Activated CD4-positive, alpha-beta memory T cell treated with anti-CD3 and anti-CD28 coated beads, Interleukin-2, amount 10 ng/mL, durations not matched to agents 7 days and 5 days (primary cell): ENCODE measurements at regions of chr16 and their contacts with region 1.

Region 1: GRCh38 chr16:15643048-15643945 is at the start of gene MARF1:
- DNase-seq: peak; percentile 99
- H3K4me3 Mint-ChIP-seq: peak within 1 kb of the TSS; percentile 86
- H3K27ac Mint-ChIP-seq: peak within 1 kb of the TSS; percentile 93
- H3K4me1 Mint-ChIP-seq: peaks cover 50% of the 10 kb centered on the region
- H3K27me3 Mint-ChIP-seq: no peaks in the 10 kb centered on the region
- total RNA-seq, gene MARF1: 85.4 to 85.5 TPM

Region 2: DNA sequence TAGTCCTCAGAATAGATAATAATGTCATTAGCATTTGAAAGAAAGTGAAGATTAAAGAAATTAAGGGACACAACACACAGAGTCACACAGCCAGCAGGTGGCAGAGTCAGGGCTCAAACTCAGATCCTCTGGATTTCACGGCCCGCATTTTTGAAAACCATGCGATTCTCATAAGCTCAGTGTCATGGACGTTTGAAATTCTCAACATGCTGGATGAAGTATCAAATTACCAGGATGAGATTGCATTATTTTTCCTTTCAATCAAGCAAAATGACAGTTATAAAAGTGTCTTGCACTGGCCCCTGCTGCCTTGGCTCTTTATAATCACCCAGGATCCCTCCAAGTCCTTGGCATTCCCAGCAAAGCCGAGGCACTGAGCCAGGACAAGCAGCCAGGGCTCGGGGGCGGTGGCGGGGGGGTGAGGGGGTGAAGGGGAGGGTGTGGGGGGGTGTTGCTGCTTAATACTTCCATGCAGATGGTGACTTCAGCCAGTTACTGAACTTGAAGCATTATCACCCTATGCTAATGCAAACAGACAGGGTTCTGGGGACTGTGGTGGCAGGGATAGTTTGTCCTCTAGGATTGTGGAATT is 215.6 kb before region 1 on chr16:
- CTCF ChIA-PET with region 1: interaction called, 10 read pairs
- POLR2A ChIA-PET with region 1: no interaction called
- DNase-seq: peak; percentile 55
- H3K4me3 Mint-ChIP-seq: no peak overlapping the region
- H3K27ac Mint-ChIP-seq: no peak overlapping the region
- H3K4me1 Mint-ChIP-seq: peaks cover 3% of the 10 kb centered on the region
- H3K27me3 Mint-ChIP-seq: peaks cover 8% of the 10 kb centered on the region

Region 3: DNA sequence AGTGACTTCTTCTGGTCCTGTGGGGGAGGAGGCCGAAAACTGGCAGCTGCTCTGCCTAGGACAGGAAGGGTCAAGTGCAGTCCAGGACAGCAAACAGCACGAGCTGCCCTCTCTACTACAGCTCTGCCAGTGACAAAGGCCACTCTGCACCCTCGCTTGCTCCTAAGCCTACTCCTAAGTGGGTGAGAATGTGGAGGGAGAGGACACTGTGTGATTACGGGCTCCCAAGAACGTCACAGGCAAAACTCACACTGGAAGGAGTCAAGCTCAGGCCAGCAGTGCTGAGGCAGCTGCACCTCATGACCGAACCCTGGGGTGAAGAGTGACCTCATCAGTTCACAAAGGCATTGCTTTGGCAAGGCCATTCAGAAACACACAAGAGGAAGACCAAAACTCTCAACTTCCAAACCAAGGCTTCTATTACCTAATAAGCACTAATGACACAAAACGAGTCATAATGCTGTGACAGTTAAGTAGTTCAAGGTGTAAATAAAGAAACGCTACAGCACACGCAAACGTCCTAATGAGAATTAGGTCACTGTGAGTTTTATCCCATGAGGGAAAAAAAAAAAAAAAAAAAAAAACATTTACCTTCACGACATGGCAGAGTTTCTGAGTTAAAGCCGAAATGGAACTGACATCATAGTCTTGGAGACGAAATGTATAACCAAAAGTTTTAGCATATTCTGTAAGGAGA is 35.4 kb before region 1 on chr16:
- CTCF ChIA-PET with region 1: no interaction called
- POLR2A ChIA-PET with region 1: interaction called, 11 read pairs
- DNase-seq: no peak
- H3K4me3 Mint-ChIP-seq: no peak overlapping the region
- H3K27ac Mint-ChIP-seq: no peak overlapping the region
- H3K4me1 Mint-ChIP-seq: peaks cover 7% of the 10 kb centered on the region
- H3K27me3 Mint-ChIP-seq: no peaks in the 10 kb centered on the region

Region 4: DNA sequence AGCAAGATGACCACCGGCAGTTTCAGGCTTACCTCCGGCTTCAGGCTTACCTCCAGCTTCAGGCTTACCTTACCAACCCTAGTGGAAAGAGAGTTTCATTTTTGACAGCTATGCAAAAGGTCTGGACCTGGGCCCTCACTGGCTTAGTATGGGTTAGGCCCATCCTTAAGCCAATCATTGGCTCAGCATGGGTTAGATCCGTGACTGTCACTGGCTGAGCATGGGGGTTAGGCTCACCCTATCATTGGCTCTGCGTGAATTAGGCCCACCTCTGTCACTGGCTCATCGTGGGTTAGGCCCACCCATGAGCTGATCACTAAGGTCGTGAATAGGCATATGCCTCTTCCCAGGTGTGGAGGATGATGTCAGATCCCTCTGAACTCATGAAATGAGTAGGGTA is 14.9 kb after region 1 on chr16:
- CTCF ChIA-PET with region 1: interaction called, 5 read pairs
- POLR2A ChIA-PET with region 1: interaction called, 39 read pairs
- DNase-seq: no peak
- H3K4me3 Mint-ChIP-seq: no peak overlapping the region
- H3K27ac Mint-ChIP-seq: peak overlapping the region; percentile 52
- H3K4me1 Mint-ChIP-seq: peaks cover 57% of the 10 kb centered on the region
- H3K27me3 Mint-ChIP-seq: no peaks in the 10 kb centered on the region

Region 5: GRCh38 chr16:15672514-15673167 is 29.3 kb after region 1 on chr16:
- CTCF ChIA-PET with region 1: interaction called, 9 read pairs
- POLR2A ChIA-PET with region 1: interaction called, 50 read pairs
- DNase-seq: peak; percentile 89
- H3K4me3 Mint-ChIP-seq: peak overlapping the region; percentile 66
- H3K27ac Mint-ChIP-seq: peak overlapping the region; percentile 99
- H3K4me1 Mint-ChIP-seq: peaks cover 59% of the 10 kb centered on the region
- H3K27me3 Mint-ChIP-seq: no peaks in the 10 kb centered on the region

Region 6: GRCh38 chr16:15843635-15844279 is 200.5 kb after region 1 on chr16:
- CTCF ChIA-PET with region 1: no interaction called
- POLR2A ChIA-PET with region 1: no interaction called
- DNase-seq: no peak
- H3K4me3 Mint-ChIP-seq: no peak overlapping the region
- H3K27ac Mint-ChIP-seq: no peak overlapping the region
- H3K4me1 Mint-ChIP-seq: no peaks in the 10 kb centered on the region
- H3K27me3 Mint-ChIP-seq: peaks cover 9% of the 10 kb centered on the region